Cardiac septum (tissue), 1 donor: ENCODE measurements at regions of chr7 and their contacts with region 1.

Region 1: DNA sequence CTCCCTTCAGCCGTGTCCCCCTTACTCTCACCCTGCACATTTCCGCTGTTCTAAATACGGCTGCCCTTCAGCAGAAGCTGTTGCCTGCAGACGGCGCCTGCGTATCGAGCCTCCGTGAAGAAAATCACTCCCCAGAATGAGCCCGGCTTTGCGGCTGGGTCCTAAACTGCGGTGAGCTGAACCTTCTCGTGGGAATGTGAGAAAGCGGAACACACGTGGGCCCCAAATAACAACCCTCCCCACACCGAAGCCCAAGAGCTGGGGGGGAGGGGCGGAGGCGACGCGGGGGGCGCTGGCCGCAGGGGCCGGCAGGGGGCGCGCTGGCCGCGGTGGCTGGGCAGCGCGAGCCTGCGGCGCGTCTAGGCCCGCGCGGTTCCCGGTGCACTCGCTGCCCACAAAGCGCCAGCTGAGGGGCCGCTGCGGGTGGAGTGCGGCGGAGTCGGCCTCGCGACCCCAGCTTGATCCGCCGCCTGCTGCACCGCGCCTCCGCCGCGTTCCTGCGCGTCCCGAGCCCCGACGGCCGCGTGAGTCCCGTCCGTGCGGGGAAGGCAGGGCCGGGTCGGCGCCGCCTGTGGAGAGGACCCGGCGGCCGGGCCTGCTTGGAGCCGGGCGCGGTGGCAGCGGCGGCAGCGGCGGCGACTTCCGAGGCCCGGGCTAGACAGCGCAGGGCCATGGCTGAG is at the start of gene ZNF398:
- DNase-seq: peak; percentile 90
- total RNA-seq, gene ZNF398: 7.4 TPM

Region 2: DNA sequence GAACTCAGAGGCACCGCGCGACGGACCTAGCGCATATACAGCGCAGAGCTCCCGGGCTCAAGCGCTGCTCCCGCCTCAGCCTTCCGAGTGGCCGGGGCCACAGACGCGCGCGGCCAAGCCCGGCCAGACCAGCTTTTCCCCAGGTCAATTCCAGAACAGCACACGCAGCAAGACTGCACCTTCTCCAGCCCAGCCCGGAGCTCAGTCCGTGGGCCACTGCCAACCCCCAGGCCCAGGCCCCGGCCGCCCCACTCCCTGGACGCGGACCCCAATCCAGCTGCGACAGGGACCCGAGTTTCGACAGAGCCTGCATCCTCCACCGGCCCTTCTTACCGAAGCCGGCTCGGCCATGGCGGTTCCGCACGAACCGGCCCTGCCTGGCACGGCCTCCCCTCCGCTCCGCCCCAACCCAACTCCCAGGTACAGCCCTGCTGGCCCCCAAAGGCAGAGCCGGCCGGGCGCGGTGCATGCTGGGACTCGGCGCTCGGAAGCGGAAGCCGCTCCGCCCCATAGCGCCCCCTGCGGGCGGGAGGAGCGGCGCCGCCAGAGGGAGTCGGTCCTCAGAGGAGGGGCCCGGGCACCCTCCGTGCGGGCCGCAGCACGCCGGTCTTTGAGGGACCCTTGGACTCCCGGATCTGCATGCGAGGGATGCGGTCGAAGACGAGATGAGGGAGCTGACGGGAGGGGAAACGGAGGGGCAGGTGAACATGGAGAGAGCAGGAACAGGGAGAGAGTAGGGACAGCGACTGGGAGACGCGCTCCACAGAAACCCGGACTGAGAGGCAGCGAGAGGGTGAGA is 21.1 kb before region 1 on chr7 and contains the start of gene ZNF425:
- intact Hi-C with region 1: loop called (anchors 1 kb)
- DNase-seq: peak; percentile 95
- total RNA-seq, gene ZNF425: 0.78 TPM

Region 3: DNA sequence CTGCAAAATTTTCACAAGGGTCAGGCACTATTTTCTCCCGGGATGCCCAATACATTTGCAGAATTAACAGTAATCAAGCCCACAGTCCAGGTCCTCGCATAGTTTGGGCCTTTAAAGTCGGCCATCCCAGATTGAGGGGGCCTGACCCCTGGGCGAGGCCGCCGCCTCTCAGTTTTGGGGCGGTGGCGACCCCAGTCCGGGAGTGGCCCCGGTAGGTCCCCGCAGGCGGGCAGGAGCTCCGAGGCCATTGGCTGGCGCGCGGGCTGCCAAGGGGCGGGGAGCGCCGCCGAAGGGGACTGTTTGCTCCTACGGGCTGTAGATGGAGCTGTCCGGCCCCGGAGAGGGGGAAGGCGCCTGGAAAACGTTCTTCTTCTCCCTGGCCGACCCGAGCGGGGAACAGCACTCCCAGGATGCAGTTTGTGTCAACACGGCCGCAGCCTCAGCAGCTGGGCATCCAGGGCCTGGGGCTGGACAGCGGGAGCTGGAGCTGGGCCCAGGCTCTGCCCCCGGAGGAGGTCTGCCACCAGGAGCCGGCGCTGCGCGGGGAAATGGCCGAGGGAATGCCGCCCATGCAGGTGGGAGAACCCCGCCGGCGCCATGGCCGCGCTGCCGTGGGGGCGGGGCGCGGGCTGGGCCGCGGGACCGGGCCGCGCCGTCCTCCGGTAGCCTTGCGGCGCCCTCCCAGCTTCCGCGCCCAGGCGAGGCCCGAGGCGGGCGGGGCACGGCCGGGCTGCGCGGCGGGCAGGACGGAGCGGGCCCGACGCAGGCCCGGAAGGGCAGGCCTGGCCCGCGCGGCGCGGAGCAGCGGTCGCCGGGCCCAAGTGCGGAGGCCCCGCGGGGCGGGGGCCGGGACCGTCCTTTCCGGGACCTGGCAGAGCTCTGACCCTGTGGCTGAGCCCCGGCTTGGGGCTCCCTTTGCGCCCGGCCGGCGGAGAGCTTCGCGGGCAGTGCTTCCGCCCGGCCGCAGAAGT is 48.3 kb after region 1 on chr7 and contains the start of gene ZNF282:
- intact Hi-C with region 1: loop called (anchors 5 kb)
- DNase-seq: peak; percentile 95
- total RNA-seq, gene ZNF282: 12.6 TPM